IMR-90 (cell line): ENCODE measurements at regions of chr19 and their contacts with region 1.

Region 1: DNA sequence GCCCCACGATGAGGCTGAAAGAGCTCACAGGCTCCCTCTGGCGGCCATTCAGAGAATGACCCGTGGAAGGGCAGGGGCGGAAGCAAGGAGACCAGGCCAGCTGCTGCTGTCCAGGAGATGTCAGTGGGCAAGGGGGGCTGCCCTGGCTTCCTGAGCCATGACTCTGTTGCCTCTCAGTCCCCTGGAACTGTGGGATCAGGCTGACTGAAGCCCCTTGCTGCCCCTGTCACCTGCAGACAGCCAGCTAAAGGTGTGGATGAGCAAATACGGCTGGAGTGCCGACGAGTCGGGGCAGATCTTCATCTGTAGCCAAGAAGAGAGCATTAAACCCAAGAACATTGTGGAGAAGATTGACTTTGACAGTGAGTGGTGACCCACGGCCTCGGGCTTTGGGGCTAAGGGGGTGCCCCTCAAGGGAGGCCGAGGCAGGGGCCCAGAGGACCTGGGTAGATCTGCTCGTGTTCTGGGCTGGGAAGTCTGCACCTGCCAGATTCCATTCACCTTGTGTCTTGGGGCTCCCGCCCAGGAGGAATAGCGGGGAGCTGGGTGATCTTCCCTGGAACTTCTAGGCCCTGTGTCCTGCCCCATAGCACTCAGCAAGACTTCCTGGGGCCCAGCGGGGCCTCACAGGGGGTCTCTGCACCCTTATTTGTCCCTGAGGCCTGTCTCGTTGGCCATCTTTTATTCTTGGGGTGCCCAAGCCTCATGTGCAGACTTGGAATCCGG is 12.5 kb upstream of the ACTN4 start:
- DNase-seq: peak; percentile 54
- ATAC-seq: peak; percentile 85
- H3K4me3 ChIP-seq: no peak overlapping the region
- H3K27ac ChIP-seq: no peak overlapping the region
- H3K4me1 ChIP-seq: no peaks in the 10 kb centered on the region
- H3K27me3 ChIP-seq: no peaks in the 10 kb centered on the region
- CTCF ChIP-seq: peak; percentile 79
- POLR2A ChIP-seq: no peak
- RAD21 ChIP-seq: peak; percentile 69

Region 2: GRCh38 chr19:38402967-38403861 is 231.7 kb before region 1 on chr19 and contains the start of gene FAM98C:
- CTCF ChIA-PET with region 1: interaction called, 3 read pairs
- POLR2A ChIA-PET with region 1: interaction called, 13 read pairs
- dilution Hi-C with region 1: no loop called
- in situ Hi-C with region 1: no loop called
- intact Hi-C with region 1: loop called (anchors 1 kb)
- DNase-seq: peak; percentile 92
- ATAC-seq: peak; percentile 98
- H3K4me3 ChIP-seq: peak within 1 kb of the TSS; percentile 79
- H3K27ac ChIP-seq: peak within 1 kb of the TSS; percentile 69
- H3K4me1 ChIP-seq: no peaks in the 10 kb centered on the region
- H3K27me3 ChIP-seq: no peaks in the 10 kb centered on the region
- CTCF ChIP-seq: peak; percentile 98
- POLR2A ChIP-seq: peak; percentile 53; the same call in 1 of the 2 replicates
- RAD21 ChIP-seq: peak; percentile 78
- total RNA-seq, gene FAM98C: 3.6 and 4.2 TPM in 2 replicates

Region 3: DNA sequence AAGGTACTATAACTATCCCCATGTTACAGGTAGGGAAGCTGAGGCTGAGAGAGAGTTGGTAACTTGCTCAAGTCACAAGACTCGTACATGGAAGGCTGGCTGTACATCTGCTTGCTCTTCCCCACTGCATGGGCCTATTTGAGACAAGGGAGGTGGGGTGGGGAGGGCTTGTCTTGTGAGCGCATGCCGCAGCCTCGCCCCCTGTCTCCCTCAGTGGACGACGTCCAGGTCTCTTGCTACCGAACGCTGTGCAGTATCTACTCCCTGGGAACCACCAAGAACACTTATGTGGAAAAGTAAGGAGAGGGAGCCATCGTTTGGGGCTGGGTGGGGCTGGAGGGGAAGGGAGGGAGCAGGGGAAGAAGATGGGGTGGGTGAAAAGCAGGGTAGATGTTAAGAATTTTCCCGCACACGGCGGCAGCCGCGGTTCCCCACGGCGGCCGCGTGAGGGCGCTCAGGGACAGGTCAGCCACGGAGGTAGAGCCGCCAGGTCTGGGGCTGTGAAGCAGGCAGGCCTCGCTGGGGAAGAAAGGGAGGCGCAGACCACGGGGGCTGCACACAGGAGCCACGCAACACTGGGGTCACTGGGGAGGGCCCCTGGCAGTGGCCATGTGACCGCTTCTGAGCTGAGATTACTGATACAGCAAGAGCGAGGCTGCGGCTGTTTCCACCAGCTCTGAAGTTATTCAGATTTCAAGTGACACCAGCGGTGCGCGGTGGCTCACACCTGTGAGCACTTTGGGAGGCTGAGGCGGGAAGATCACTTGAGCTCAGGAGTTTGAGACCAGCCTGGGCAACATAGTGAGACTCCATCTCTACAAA is 119.9 kb before region 1 on chr19:
- CTCF ChIA-PET with region 1: interaction called, 4 read pairs
- POLR2A ChIA-PET with region 1: no interaction called
- dilution Hi-C with region 1: no loop called
- in situ Hi-C with region 1: no loop called
- intact Hi-C with region 1: loop called (anchors 2 kb)
- DNase-seq: peak; percentile 37
- ATAC-seq: peak; percentile 99
- H3K4me3 ChIP-seq: no peak overlapping the region
- H3K27ac ChIP-seq: no peak overlapping the region
- H3K4me1 ChIP-seq: no peaks in the 10 kb centered on the region
- H3K27me3 ChIP-seq: peaks cover 15% of the 10 kb centered on the region
- CTCF ChIP-seq: peak; percentile 83
- POLR2A ChIP-seq: no peak
- RAD21 ChIP-seq: peak; percentile 90

Region 4: GRCh38 chr19:38544034-38544958 is 90.6 kb before region 1 on chr19:
- CTCF ChIA-PET with region 1: no interaction called
- POLR2A ChIA-PET with region 1: no interaction called
- dilution Hi-C with region 1: no loop called
- in situ Hi-C with region 1: no loop called
- intact Hi-C with region 1: loop called (anchors 1 kb)
- DNase-seq: peak; percentile 86
- ATAC-seq: peak; percentile 91
- H3K4me3 ChIP-seq: peak overlapping the region; percentile 23; the same call in 1 of the 2 replicates
- H3K27ac ChIP-seq: no peak overlapping the region
- H3K4me1 ChIP-seq: no peaks in the 10 kb centered on the region; the same call in 1 of the 2 replicates
- H3K27me3 ChIP-seq: peaks cover 6% of the 10 kb centered on the region
- CTCF ChIP-seq: peak; percentile 63
- POLR2A ChIP-seq: no peak
- RAD21 ChIP-seq: peak; percentile 75

Region 5: GRCh38 chr19:38618590-38619360 is 16.1 kb before region 1 on chr19 and contains the start of gene EIF3K:
- CTCF ChIA-PET with region 1: no interaction called
- POLR2A ChIA-PET with region 1: interaction called, 11 read pairs
- dilution Hi-C with region 1: no loop called
- in situ Hi-C with region 1: no loop called
- intact Hi-C with region 1: no loop called
- DNase-seq: peak; percentile 99
- ATAC-seq: peak; percentile 97
- H3K4me3 ChIP-seq: peak within 1 kb of the TSS; percentile 63
- H3K27ac ChIP-seq: peak within 1 kb of the TSS; percentile 78
- H3K4me1 ChIP-seq: peaks cover 6% of the 10 kb centered on the region; the same call in 1 of the 2 replicates
- H3K27me3 ChIP-seq: no peaks in the 10 kb centered on the region
- CTCF ChIP-seq: no peak
- POLR2A ChIP-seq: peak; percentile 81
- RAD21 ChIP-seq: no peak
- total RNA-seq, gene EIF3K: 965 and 1,137 TPM in 2 replicates